Transverse colon (tissue), 4 donors: ENCODE measurements at regions of chr9 and their contacts with region 1.

Region 1: DNA sequence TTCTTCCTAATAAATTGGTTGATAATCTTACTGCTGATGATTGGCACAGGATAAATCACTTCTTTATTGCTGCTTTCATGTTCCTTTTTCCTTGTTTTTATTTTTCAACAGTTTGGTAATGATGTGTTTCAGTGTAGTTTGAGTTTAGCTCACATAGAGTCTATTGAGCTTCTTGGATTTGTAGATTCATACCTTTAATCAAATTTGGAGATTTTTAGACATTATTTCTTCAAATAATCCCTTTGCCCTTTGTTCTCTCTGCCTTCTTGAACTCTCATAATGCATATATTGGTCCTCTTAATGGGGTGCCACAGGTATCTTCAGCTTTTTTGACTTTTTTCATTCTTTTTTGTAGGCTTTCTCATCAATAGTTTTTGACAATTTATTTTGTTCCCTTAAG is 275.3 kb downstream of the TLE4 start:
- DNase-seq: no peak
- H3K4me3 ChIP-seq: no peak overlapping the region
- H3K27ac ChIP-seq: no peak overlapping the region
- H3K4me1 ChIP-seq: no peaks in the 10 kb centered on the region
- H3K27me3 ChIP-seq: no peaks in the 10 kb centered on the region
- CTCF ChIP-seq: no peak
- EP300 ChIP-seq: no peak
- POLR2A ChIP-seq: no peak

Region 2: DNA sequence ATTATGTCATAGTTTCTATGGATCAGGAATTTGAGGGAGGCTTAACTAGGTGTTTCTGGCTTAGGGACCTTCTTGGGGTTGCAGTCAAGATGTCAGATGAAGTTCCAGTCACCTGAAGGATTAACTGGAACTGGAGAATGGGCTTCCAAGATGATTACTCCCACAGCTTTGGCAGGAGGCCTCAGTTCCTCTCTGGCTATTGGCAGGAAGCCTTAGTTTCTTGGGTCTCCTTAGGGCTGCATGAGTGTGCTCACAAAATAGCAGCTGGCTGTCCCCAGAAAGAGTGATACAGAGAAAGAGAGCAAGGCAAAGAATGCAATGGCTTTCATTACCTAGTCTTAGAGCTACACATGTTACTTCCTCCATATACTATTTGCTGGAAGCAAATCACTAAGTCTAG is 413.4 kb before region 1 on chr9:
- in situ Hi-C with region 1: no loop called
- intact Hi-C with region 1: no loop called
- DNase-seq: no peak
- H3K4me3 ChIP-seq: no peak overlapping the region
- H3K27ac ChIP-seq: no peak overlapping the region
- H3K4me1 ChIP-seq: no peaks in the 10 kb centered on the region
- H3K27me3 ChIP-seq: no peaks in the 10 kb centered on the region
- CTCF ChIP-seq: no peak
- EP300 ChIP-seq: no peak
- POLR2A ChIP-seq: no peak

Region 3: DNA sequence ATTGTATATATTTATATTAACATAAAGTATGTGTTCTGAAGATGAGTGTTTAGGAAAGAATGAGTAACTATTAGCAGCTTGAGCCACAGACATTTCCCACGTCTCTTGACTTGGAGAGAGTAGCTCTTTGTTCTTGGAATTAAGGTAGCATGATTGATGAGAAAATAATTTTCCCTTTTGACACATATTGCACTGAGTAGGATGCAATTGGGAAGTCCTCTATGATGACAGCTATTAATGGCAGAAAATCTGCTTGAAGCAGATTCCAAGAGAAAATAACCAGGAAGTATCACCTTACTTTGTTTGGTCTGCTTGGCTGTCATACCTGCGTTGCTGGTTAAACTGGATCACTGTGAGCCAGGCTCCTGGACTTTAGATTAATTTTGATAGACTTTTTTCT is 70.5 kb before region 1 on chr9:
- in situ Hi-C with region 1: no loop called
- intact Hi-C with region 1: no loop called
- DNase-seq: no peak
- H3K4me3 ChIP-seq: no peak overlapping the region
- H3K27ac ChIP-seq: no peak overlapping the region
- H3K4me1 ChIP-seq: no peaks in the 10 kb centered on the region
- H3K27me3 ChIP-seq: no peaks in the 10 kb centered on the region
- CTCF ChIP-seq: no peak
- EP300 ChIP-seq: no peak
- POLR2A ChIP-seq: no peak

Region 4: DNA sequence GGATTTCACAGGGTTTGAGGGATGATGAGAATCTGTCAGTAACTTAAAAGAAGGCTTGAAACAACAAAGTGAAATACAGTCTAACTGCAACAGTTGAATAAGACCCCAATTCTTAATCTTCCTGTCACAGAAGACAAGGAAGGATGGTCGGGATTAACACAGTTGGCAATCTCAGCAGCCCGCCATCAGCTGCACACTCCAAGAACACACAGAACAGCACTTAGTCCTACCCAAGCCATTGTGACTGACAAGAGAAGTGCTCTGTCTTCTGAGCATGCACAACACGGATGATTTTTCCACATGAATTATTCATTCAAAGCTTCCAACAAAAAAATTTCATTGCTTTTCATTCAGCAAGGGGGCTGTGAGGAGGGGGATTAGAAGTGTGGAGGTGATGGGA is 300.8 kb after region 1 on chr9:
- in situ Hi-C with region 1: no loop called
- intact Hi-C with region 1: loop called (anchors 2 kb)
- DNase-seq: no peak
- H3K4me3 ChIP-seq: no peak overlapping the region
- H3K27ac ChIP-seq: no peak overlapping the region
- H3K4me1 ChIP-seq: no peaks in the 10 kb centered on the region
- H3K27me3 ChIP-seq: no peaks in the 10 kb centered on the region
- CTCF ChIP-seq: no peak
- EP300 ChIP-seq: no peak
- POLR2A ChIP-seq: no peak

Region 5: DNA sequence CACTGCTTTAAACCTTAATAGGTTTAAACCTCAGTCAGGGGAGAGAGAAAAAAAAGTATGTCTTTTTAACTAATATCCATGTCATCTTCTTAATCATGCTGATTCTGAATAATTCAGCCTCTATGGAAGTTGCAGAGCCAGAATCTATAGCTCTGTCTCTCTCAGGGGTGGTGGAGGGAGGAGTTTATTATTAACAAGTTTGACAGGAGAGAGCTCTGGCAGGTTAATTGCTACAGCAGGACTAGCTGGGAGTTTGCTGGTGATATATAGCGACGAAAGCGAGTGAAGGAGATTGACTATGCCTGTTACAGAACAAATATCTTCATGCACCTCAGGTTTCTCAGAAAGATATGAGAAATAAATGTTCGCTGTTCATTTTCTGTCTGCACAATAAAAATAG is 311.1 kb after region 1 on chr9:
- in situ Hi-C with region 1: no loop called
- intact Hi-C with region 1: no loop called
- DNase-seq: no peak
- H3K4me3 ChIP-seq: no peak overlapping the region
- H3K27ac ChIP-seq: no peak overlapping the region
- H3K4me1 ChIP-seq: peaks cover 0 to 13% (median 4%) of the 10 kb centered on the region in 4 donors
- H3K27me3 ChIP-seq: no peaks in the 10 kb centered on the region
- CTCF ChIP-seq: no peak
- EP300 ChIP-seq: no peak
- POLR2A ChIP-seq: no peak